SK-N-SH (cell line): ENCODE measurements at regions of chr5 and their contacts with region 1.

Region 1: DNA sequence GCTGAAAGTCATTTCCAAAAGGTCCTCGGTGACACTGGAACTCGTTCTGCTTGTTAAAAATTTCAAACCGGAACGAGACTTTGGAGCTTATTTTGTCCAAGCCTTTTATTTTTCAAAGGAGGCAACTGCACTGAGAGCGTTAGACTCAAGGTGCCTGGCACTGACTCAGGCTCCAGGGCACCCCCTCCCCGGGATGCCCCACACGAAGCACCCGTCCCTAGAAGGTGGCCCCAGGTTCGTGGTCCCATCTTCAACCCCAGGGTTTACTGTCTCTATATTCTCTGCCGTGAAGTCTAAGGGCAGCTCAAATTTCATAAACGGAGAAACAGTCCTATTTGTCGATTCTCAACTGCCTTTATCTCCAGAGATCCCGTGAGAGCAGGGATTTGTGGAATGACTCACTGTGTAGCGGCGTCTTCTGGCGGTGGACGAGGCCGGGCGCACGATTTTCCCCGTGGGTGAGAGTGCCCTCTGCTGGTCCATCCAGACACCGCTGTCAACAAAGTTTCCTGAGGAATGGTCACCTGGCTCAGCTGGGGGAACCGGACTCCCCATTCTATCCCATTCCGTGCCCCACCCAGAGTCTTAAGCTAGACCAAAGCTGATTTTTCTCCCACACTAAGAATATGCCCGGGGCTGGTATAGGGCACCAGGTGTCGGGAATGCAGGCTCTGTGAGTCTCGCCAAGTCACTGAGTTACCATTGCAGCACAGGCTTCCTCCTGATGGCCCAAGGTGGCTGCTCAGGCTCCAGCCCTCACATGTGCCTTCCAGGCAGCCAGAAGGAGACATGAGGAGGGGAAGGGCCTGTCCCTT is 27.1 kb upstream of the SLC6A19 start:
- DNase-seq: peak; percentile 82
- H3K4me3 ChIP-seq: no peak overlapping the region; a peak in 1 of 4 replicates
- H3K27ac ChIP-seq: no peak overlapping the region
- H3K4me1 ChIP-seq: no peaks in the 10 kb centered on the region; a peak in 1 of 4 replicates
- H3K27me3 ChIP-seq: no peaks in the 10 kb centered on the region
- CTCF ChIP-seq: peak; percentile 82
- EP300 ChIP-seq: no peak
- RAD21 ChIP-seq: peak; percentile 71

Region 2: DNA sequence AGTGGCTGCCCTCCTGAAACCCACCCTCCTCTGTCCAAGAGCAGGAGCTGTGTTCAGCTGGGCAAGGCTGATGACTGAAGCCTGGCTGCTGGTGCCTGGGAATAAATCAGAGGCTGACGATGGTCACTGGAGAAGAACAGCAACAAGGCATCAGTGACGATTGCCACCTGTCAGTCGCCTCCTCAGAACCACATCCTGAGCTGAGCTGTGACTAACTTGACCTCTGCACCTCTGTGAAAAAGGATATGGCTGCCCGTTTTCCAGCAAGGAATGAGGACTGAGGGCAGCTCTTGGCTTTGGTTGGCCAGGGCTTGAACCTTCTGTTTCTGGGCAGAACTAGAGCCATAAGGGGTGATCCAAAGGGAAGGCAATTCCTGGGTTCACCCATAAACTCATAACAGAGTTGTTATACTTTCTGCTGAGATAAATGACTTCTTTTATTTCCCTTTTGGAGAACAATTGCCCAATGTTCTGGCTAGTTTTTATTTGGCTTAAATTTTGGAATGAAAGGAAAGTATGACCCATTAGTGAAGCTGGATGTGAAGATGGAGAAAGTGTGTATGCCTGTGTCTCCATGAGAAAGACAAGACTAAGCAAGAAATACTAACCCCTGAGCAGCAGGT is 241.6 kb before region 1 on chr5:
- CTCF ChIA-PET with region 1: interaction called, 54 read pairs
- POLR2A ChIA-PET with region 1: no interaction called
- DNase-seq: no peak
- H3K4me3 ChIP-seq: no peak overlapping the region
- H3K27ac ChIP-seq: no peak overlapping the region
- H3K4me1 ChIP-seq: no peaks in the 10 kb centered on the region
- H3K27me3 ChIP-seq: peaks cover 12% of the 10 kb centered on the region
- CTCF ChIP-seq: no peak
- EP300 ChIP-seq: no peak
- RAD21 ChIP-seq: no peak

Region 3: GRCh38 chr5:1246711-1247431 is 72.5 kb after region 1 on chr5:
- CTCF ChIA-PET with region 1: interaction called, 12 read pairs
- POLR2A ChIA-PET with region 1: no interaction called
- DNase-seq: peak; percentile 52
- H3K4me3 ChIP-seq: no peak overlapping the region; a peak in 1 of 4 replicates
- H3K27ac ChIP-seq: no peak overlapping the region
- H3K4me1 ChIP-seq: no peaks in the 10 kb centered on the region; a peak in 1 of 4 replicates
- H3K27me3 ChIP-seq: peaks cover 10% of the 10 kb centered on the region; the same call in 1 of the 2 replicates
- CTCF ChIP-seq: no peak
- EP300 ChIP-seq: no peak
- RAD21 ChIP-seq: no peak

Region 4: GRCh38 chr5:1751016-1751878 is 576.9 kb after region 1 on chr5:
- CTCF ChIA-PET with region 1: no interaction called
- POLR2A ChIA-PET with region 1: no interaction called
- DNase-seq: no peak
- H3K4me3 ChIP-seq: no peak overlapping the region
- H3K27ac ChIP-seq: no peak overlapping the region
- H3K4me1 ChIP-seq: no peaks in the 10 kb centered on the region
- H3K27me3 ChIP-seq: peaks cover 75% of the 10 kb centered on the region
- CTCF ChIP-seq: no peak
- EP300 ChIP-seq: no peak
- RAD21 ChIP-seq: no peak